BJ (cell line): ENCODE measurements at regions of chr22 and their contacts with region 1.

Region 1: DNA sequence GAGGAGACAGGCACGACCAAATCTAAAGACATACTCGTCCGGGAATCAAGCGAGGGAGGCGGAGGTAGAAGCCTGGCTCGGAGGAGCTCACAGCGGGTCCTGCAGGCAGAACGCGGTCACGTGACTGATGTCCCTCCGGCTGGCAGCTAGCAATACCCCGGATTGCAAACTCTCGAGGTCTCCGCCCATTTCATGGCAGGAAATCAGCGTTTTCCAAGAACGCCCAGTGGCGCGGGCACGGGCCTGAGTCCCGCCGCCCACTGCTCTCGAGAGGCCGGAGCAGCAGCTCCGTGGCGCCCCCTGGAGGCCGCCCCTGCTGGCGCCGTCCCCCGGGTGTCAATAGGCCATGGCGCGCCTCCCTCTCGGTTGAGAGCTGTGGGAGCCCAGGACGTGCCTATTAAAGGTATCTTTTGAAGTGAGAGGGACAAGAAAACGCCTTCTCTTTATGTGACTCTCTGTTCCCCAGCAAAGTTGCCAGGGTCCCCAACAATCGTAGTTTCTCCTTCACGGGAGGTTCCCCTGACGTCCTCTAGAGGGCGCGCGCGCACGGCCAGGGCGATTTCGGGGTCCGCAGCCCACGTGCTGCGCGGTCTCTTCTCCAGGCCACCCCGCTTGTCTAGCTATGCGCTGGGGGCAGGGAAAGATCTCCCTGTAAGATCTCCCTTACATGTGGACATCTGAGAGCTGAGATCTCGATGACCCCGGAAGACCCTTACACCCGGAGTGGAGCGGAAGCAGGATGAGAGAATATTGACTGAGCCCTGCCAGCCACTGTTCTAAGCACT is 37.3 kb upstream of the RBFOX2 start:
- DNase-seq: peak; percentile 64
- H3K4me3 ChIP-seq: peak overlapping the region; percentile 51
- H3K27me3 ChIP-seq: no peaks in the 10 kb centered on the region
- CTCF ChIP-seq: peak; percentile 98

Region 2: DNA sequence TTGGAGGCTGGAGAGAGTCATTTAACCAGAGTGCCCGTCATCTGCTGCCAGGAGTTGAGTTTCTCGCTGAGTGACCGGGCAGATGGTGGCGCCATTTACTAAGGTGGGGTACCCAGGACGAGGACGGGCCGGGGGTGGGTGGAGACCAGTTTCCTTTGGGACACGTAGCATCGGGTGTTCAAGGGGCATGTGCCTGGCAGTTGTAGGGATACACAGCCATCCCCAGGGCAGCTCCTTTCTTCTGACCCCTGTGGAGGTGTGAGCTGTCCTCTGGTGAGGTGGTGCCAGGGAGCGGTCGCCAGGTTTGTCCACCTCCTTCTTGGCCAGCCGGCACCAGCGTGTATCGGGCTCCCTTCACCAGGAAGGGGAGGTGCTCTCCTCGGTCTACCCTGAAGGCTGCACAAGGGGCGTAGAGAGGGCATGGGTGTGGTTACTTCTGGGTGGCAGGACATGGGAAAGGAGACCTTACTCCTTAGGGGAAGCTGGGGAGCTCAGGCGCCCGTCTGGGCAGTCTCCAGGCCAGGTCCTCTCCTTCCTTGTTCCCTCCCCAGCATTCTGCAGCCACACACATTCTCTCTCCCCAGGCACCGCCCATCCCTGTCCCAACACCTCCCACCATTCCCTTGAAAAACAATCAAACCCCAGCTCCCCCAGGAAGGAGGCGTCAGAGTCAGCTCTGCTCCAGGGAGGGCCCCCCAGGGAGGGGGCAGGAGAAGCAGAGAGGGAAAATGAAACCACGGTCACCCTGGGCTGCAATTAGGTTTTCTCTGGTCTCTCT is 438.5 kb before region 1 on chr22:
- CTCF ChIA-PET with region 1: interaction called, 28 read pairs
- POLR2A ChIA-PET with region 1: no interaction called
- DNase-seq: peak; percentile 69
- H3K4me3 ChIP-seq: peak overlapping the region; percentile 49
- H3K27me3 ChIP-seq: no peaks in the 10 kb centered on the region
- CTCF ChIP-seq: peak; percentile 70

Region 3: GRCh38 chr22:35938226-35938625 is 127.7 kb before region 1 on chr22:
- CTCF ChIA-PET with region 1: interaction called, 59 read pairs
- POLR2A ChIA-PET with region 1: no interaction called
- DNase-seq: no peak
- H3K4me3 ChIP-seq: no peak overlapping the region
- H3K27me3 ChIP-seq: no peaks in the 10 kb centered on the region
- CTCF ChIP-seq: no peak

Region 4: GRCh38 chr22:35977136-35977535 is 88.8 kb before region 1 on chr22:
- CTCF ChIA-PET with region 1: interaction called, 33 read pairs
- POLR2A ChIA-PET with region 1: no interaction called
- DNase-seq: no peak
- H3K4me3 ChIP-seq: no peak overlapping the region
- H3K27me3 ChIP-seq: no peaks in the 10 kb centered on the region
- CTCF ChIP-seq: no peak

Region 5: DNA sequence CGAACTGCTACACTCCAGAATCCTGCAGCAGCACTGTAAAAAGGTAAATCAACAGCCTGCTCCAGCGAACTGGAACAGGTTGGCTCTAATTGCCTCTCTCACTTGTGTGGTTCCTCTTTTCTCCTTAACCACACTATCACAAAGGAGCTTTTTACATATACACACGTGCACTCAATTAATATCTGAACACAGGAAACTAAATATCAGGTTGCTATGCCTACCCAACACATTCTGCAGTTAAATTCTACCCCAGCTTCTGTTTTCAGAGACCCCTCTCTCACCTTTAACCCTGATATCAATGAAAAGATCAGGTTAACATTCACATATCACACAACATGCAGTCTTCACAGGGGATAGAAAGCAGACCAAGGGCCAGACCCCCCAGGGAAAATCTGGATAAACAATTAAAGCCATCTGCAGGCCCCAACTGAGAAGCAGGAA is 48.3 kb before region 1 on chr22:
- CTCF ChIA-PET with region 1: interaction called, 18 read pairs
- POLR2A ChIA-PET with region 1: no interaction called
- DNase-seq: no peak
- H3K4me3 ChIP-seq: no peak overlapping the region
- H3K27me3 ChIP-seq: no peaks in the 10 kb centered on the region
- CTCF ChIP-seq: no peak

Region 6: DNA sequence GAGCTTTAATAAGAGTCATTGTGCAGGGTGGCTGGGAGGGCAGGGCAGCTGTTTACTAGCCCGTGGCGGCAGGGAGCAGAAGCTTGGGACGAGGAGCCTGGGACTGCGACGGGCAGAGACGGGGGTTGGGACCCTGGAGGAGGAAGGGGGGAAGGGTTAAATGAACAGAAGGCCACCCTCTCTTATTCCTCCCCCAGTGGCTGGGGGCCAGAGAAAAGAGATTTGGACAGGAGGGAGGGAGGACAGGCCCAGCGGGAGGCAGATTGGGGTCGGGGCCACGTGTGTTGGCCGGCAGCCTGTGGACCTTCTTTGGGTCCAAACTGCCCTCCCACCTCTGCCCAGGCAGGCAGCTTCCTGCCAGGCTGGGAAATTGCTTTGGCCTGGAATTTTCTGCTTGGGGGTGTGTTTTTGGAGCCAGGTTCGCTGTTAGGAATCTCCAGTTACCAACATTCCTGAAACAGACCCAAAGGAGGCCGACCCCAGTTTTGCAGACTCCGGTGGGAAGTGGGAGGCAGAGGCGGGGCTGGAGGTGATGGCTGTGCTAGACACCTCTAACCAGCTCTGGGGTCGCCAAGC is 44.4 kb after region 1 on chr22:
- CTCF ChIA-PET with region 1: interaction called, 24 read pairs
- POLR2A ChIA-PET with region 1: no interaction called
- DNase-seq: no peak
- H3K4me3 ChIP-seq: no peak overlapping the region
- H3K27me3 ChIP-seq: no peaks in the 10 kb centered on the region
- CTCF ChIP-seq: no peak